Gastrocnemius medialis (tissue), 4 donors: ENCODE measurements at regions of chr1 and their contacts with region 1.

Region 1: GRCh38 chr1:163174524-163175437 is 27.9 kb downstream of the RGS5 start:
- DNase-seq: peak in 1 of 2 donors; percentile 26
- ATAC-seq: peak in 1 of 2 donors; percentile 64
- H3K4me3 ChIP-seq: no peak overlapping the region
- H3K27ac ChIP-seq: no peak overlapping the region
- H3K4me1 ChIP-seq: peaks cover 0 to 9% of the 10 kb centered on the region in 2 donors
- H3K27me3 ChIP-seq: no peaks in the 10 kb centered on the region
- CTCF ChIP-seq: peak; percentile 51 to 86 (median 79)
- POLR2A ChIP-seq: no peak

Region 2: DNA sequence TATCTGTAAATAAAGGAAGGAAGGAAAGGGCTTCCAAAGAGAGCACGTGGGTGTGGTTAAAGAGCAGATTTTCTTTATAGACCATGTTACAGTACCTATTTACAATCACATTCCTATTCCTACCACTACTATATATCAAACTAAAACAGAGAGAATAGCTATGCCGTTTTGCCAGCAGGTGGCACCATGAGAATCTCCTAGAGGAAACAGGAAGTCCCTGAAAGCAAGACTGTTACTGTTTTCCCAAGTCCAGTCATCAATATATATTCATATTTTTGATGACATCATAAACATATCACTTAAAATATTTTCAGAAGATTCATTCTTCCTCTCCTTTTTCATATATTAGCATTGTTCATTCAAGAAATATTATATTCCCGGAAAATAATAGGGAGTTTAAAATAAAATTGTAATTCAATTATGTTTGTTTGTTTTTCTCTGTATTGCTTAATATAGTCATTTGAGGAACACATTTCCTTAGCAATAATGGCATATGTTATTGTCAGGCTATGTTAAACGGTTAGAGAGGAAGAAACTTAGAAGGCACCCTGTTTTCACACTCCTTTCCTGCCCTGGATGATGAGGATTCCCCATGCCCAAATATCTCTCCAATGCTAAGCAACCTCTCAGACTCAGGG is 320.4 kb before region 1 on chr1:
- in situ Hi-C with region 1: loop called in 1 of 4 experiments (anchors 10 kb)
- intact Hi-C with region 1: no loop called
- DNase-seq: peak; percentile 11 to 14
- ATAC-seq: no peak
- H3K4me3 ChIP-seq: no peak overlapping the region
- H3K27ac ChIP-seq: no peak overlapping the region
- H3K4me1 ChIP-seq: no peaks in the 10 kb centered on the region
- H3K27me3 ChIP-seq: no peaks in the 10 kb centered on the region
- CTCF ChIP-seq: peak in 3 of 5 experiments; percentile 36 to 66 (median 56)
- POLR2A ChIP-seq: no peak

Region 3: GRCh38 chr1:162878000-162878596 is 296.7 kb before region 1 on chr1:
- in situ Hi-C with region 1: loop called in 3 of 4 experiments (anchors 5 to 10 kb)
- intact Hi-C with region 1: loop called (anchors 1 kb)
- DNase-seq: peak in 1 of 2 donors; percentile 43
- ATAC-seq: peak; percentile 72 to 80
- H3K4me3 ChIP-seq: no peak overlapping the region
- H3K27ac ChIP-seq: no peak overlapping the region
- H3K4me1 ChIP-seq: peaks cover 0 to 9% of the 10 kb centered on the region in 2 donors
- H3K27me3 ChIP-seq: no peaks in the 10 kb centered on the region
- CTCF ChIP-seq: peak; percentile 56 to 80 (median 73)
- POLR2A ChIP-seq: no peak

Region 4: GRCh38 chr1:163071405-163072255 is 103.2 kb before region 1 on chr1:
- in situ Hi-C with region 1: no loop called
- intact Hi-C with region 1: loop called (anchors 10 kb)
- DNase-seq: peak in 1 of 2 donors; percentile 6
- ATAC-seq: peak in 1 of 2 donors; percentile 39
- H3K4me3 ChIP-seq: no peak overlapping the region
- H3K27ac ChIP-seq: no peak overlapping the region
- H3K4me1 ChIP-seq: no peaks in the 10 kb centered on the region
- H3K27me3 ChIP-seq: peaks cover 0 to 4% (median 0%) of the 10 kb centered on the region in 3 donors
- CTCF ChIP-seq: peak in 3 of 5 experiments; percentile 28 to 63 (median 54)
- POLR2A ChIP-seq: no peak

Region 5: GRCh38 chr1:163395790-163396189 is 221.0 kb after region 1 on chr1:
- in situ Hi-C with region 1: no loop called
- intact Hi-C with region 1: no loop called
- DNase-seq: no peak
- ATAC-seq: no peak
- H3K4me3 ChIP-seq: no peak overlapping the region
- H3K27ac ChIP-seq: no peak overlapping the region
- H3K4me1 ChIP-seq: no peaks in the 10 kb centered on the region
- H3K27me3 ChIP-seq: no peaks in the 10 kb centered on the region
- CTCF ChIP-seq: no peak
- POLR2A ChIP-seq: no peak